ENCODE measurements at regions of chr5 and their contacts with region 1.

Region 1: GRCh38 chr5:78467752-78468357 is 107.4 kb downstream of the SCAMP1 start:
- DNase-seq: peak; percentile 26 to 44 (median 39)
- ATAC-seq: peak; percentile 81
- H3K4me3 ChIP-seq: no peak overlapping the region
- H3K27ac ChIP-seq: no peak overlapping the region
- H3K4me1 ChIP-seq: peaks cover 0 to 5% of the 10 kb centered on the region in 2 experiments; a peak in 1 of 5 replicates
- H3K27me3 ChIP-seq: no peaks in the 10 kb centered on the region
- CTCF ChIP-seq: peak; percentile 60 to 80 (median 65)
- EP300 ChIP-seq: no peak
- POLR2A ChIP-seq: no peak
- RAD21 ChIP-seq: peak; percentile 73 to 84

Region 2: GRCh38 chr5:78308703-78309102 is 159.2 kb before region 1 on chr5:
- CTCF ChIA-PET with region 1: no interaction called
- POLR2A ChIA-PET with region 1: no interaction called
- in situ Hi-C with region 1: no loop called
- intact Hi-C with region 1: no loop called
- DNase-seq: no peak
- ATAC-seq: no peak
- H3K4me3 ChIP-seq: no peak overlapping the region
- H3K27ac ChIP-seq: no peak overlapping the region
- H3K4me1 ChIP-seq: no peaks in the 10 kb centered on the region
- H3K27me3 ChIP-seq: no peaks in the 10 kb centered on the region
- CTCF ChIP-seq: no peak
- EP300 ChIP-seq: no peak
- POLR2A ChIP-seq: no peak
- RAD21 ChIP-seq: no peak

Region 3: DNA sequence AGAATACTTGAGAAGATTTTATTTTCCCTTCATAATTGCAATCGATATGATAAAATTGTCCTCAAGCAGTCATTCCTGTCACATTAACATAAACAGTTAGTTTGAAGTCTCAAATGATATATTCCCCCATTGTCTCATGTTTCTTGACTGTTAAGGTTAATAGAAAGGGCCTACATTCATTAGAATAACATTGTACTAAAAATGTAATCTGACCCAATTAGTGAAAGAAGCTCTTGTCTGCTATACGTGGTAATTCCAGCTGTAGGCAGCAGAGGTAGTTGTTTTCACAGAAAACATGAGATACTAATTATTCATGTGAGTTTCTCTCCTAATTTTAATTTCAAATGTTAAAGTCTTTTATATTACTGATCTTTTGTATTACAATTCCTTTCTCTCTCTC is 147.5 kb before region 1 on chr5:
- CTCF ChIA-PET with region 1: interaction called, 3 read pairs
- POLR2A ChIA-PET with region 1: no interaction called
- in situ Hi-C with region 1: no loop called
- intact Hi-C with region 1: loop called (anchors 1 kb)
- DNase-seq: peak in 2 of 4 experiments; percentile 25 to 42
- ATAC-seq: peak; percentile 67; the same call in 2 of the 3 replicates
- H3K4me3 ChIP-seq: no peak overlapping the region
- H3K27ac ChIP-seq: no peak overlapping the region
- H3K4me1 ChIP-seq: no peaks in the 10 kb centered on the region
- H3K27me3 ChIP-seq: no peaks in the 10 kb centered on the region
- CTCF ChIP-seq: peak; percentile 42 to 79 (median 45); a peak in 4 of 6 replicates
- EP300 ChIP-seq: no peak
- POLR2A ChIP-seq: no peak
- RAD21 ChIP-seq: peak; percentile 70 to 88

Region 4: GRCh38 chr5:78627175-78627574 is 159.3 kb after region 1 on chr5:
- CTCF ChIA-PET with region 1: interaction called, 4 read pairs
- POLR2A ChIA-PET with region 1: no interaction called
- in situ Hi-C with region 1: loop called (anchors 10 kb)
- intact Hi-C with region 1: loop called (anchors 5 kb)
- DNase-seq: peak; percentile 22 to 37 (median 30)
- ATAC-seq: peak; percentile 71
- H3K4me3 ChIP-seq: no peak overlapping the region
- H3K27ac ChIP-seq: no peak overlapping the region
- H3K4me1 ChIP-seq: no peaks in the 10 kb centered on the region
- H3K27me3 ChIP-seq: no peaks in the 10 kb centered on the region
- CTCF ChIP-seq: peak; percentile 43 to 66 (median 57); a peak in 5 of 6 replicates
- EP300 ChIP-seq: no peak
- POLR2A ChIP-seq: no peak
- RAD21 ChIP-seq: peak; percentile 50 to 83

Region 5: GRCh38 chr5:78638423-78638822 is 170.6 kb after region 1 on chr5:
- CTCF ChIA-PET with region 1: no interaction called
- POLR2A ChIA-PET with region 1: no interaction called
- in situ Hi-C with region 1: loop called (anchors 10 kb)
- intact Hi-C with region 1: no loop called
- DNase-seq: no peak
- ATAC-seq: no peak
- H3K4me3 ChIP-seq: no peak overlapping the region
- H3K27ac ChIP-seq: no peak overlapping the region
- H3K4me1 ChIP-seq: peaks cover 0 to 6% of the 10 kb centered on the region in 2 experiments; a peak in 3 of 5 replicates
- H3K27me3 ChIP-seq: no peaks in the 10 kb centered on the region
- CTCF ChIP-seq: no peak
- EP300 ChIP-seq: no peak
- POLR2A ChIP-seq: no peak
- RAD21 ChIP-seq: no peak

Region 6: GRCh38 chr5:78964887-78965286 is 497.0 kb after region 1 on chr5:
- CTCF ChIA-PET with region 1: interaction called, 3 read pairs
- POLR2A ChIA-PET with region 1: interaction called, 3 read pairs
- in situ Hi-C with region 1: no loop called
- intact Hi-C with region 1: loop called (anchors 10 kb)
- DNase-seq: peak in 1 of 4 experiments; percentile 47
- ATAC-seq: peak; percentile 74
- H3K4me3 ChIP-seq: no peak overlapping the region
- H3K27ac ChIP-seq: no peak overlapping the region
- H3K4me1 ChIP-seq: no peaks in the 10 kb centered on the region
- H3K27me3 ChIP-seq: no peaks in the 10 kb centered on the region
- CTCF ChIP-seq: peak; percentile 40 to 66 (median 50); a peak in 5 of 6 replicates
- EP300 ChIP-seq: no peak
- POLR2A ChIP-seq: no peak
- RAD21 ChIP-seq: peak; percentile 90 to 91

Measured in K562 (cell line).